ENCODE measurements at regions of chr18 and their contacts with region 1.

Region 1: GRCh38 chr18:37636831-37637477 is 71.4 kb upstream of the CELF4 start:
- DNase-seq: no peak

Region 2: GRCh38 chr18:37612524-37613252 is 24.3 kb before region 1 on chr18:
- intact Hi-C with region 1: loop called in 1 of 2 experiments (anchors 1 kb)
- DNase-seq: no peak

Measured in posterior vena cava (tissue), 2 donors.